Common myeloid progenitor, CD34-positive (primary cell): ENCODE measurements at regions of chr17 and their contacts with region 1.

Region 1: GRCh38 chr17:2688351-2689342 is 22.9 kb downstream of the CLUH start:
- DNase-seq: no peak
- H3K4me3 ChIP-seq: no peak overlapping the region
- H3K27ac ChIP-seq: no peak overlapping the region
- H3K4me1 ChIP-seq: no peaks in the 10 kb centered on the region
- H3K27me3 ChIP-seq: no peaks in the 10 kb centered on the region

Region 2: GRCh38 chr17:2582493-2582892 is 106.2 kb before region 1 on chr17:
- CTCF ChIA-PET with region 1: no interaction called
- POLR2A ChIA-PET with region 1: interaction called, 10 read pairs
- DNase-seq: no peak
- H3K4me3 ChIP-seq: no peak overlapping the region
- H3K27ac ChIP-seq: no peak overlapping the region
- H3K4me1 ChIP-seq: no peaks in the 10 kb centered on the region
- H3K27me3 ChIP-seq: peaks cover 0 to 3% (median 0%) of the 10 kb centered on the region in 5 experiments

Region 3: DNA sequence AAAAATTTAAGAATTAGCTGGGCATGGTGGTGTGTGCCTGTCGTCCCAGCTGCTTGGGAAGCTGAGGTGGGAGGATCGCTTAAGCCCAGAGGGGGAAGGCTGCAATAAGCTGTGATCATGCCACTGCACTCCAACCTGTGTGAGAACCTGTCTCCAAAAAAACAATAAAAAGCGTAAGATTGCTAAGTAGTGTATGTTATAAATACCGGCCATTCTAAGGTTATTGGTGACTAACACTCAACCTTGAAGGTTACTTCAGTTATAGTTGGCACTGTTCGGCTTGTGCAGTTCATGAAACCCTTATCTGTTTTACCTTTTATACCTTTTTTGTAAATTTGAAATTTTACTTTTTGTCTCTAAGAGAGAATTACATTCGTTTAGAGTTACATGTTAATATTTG is 51.2 kb before region 1 on chr17:
- CTCF ChIA-PET with region 1: no interaction called
- POLR2A ChIA-PET with region 1: no interaction called
- DNase-seq: no peak
- H3K4me3 ChIP-seq: no peak overlapping the region
- H3K27ac ChIP-seq: no peak overlapping the region
- H3K4me1 ChIP-seq: no peaks in the 10 kb centered on the region
- H3K27me3 ChIP-seq: no peaks in the 10 kb centered on the region

Region 4: DNA sequence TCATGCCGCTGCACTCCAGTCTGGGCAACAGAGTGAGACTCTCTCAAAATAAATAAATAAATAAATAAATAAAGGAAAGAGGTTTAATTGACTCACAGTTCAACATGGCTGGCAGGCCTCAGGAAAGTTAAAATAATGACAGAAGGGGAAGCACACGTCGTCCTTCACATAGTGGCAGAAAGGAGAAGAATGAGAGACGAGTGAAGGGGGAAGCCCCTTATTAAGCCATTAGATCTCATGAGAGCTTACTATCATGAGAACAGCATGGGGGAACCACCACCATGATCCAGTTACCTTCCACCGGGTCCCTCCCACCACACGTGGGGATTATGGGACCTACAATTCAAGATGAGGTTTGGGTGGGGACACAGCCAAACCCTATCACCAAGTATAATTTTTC is 40.7 kb before region 1 on chr17:
- CTCF ChIA-PET with region 1: no interaction called
- POLR2A ChIA-PET with region 1: no interaction called
- DNase-seq: peak in 2 of 3 donors; percentile 47
- H3K4me3 ChIP-seq: no peak overlapping the region
- H3K27ac ChIP-seq: no peak overlapping the region
- H3K4me1 ChIP-seq: no peaks in the 10 kb centered on the region
- H3K27me3 ChIP-seq: no peaks in the 10 kb centered on the region

Region 5: GRCh38 chr17:2707721-2708584 is 19.3 kb after region 1 on chr17:
- CTCF ChIA-PET with region 1: no interaction called
- POLR2A ChIA-PET with region 1: no interaction called
- DNase-seq: no peak
- H3K4me3 ChIP-seq: no peak overlapping the region
- H3K27ac ChIP-seq: peak overlapping the region in 1 of 2 experiments; percentile 49
- H3K4me1 ChIP-seq: peaks cover 4 to 42% (median 33%) of the 10 kb centered on the region in 4 experiments
- H3K27me3 ChIP-seq: no peaks in the 10 kb centered on the region

Region 6: DNA sequence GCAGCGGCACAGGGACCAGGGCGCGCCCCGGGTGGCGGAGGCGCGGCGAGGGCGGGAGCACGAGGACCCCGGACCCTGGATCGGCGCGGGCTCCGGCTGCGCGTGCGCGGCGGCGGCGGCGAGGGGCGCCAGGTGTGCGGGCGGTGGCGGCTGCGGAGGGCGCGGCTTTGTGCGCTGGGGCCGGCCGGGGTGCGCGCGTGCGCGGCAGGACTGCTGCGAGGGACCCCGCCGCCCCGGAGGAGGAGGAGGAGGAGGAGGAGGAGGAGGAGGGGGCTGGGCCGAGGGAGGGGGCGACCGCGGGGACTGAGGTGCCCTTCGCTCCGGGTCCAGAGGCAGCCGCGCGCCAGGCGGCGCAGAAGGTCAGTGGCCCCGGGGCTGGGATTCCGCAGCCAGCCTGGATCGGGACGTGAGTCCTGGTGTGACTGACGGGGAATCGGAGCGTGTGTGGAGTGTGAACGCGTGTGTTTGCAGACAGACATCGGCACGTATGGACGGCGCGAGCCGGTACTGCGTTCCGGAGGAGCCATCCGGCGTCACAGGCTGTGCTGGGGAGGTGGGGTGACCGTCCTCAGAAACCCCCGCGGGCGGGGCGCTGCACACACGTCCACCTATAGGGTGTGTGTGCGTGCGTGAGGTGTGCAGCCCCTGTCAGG is 88.1 kb after region 1 on chr17:
- CTCF ChIA-PET with region 1: no interaction called
- POLR2A ChIA-PET with region 1: no interaction called
- DNase-seq: peak in 2 of 3 donors; percentile 35 to 54
- H3K4me3 ChIP-seq: peak overlapping the region; percentile 10 to 77 (median 42)
- H3K27ac ChIP-seq: no peak overlapping the region
- H3K4me1 ChIP-seq: peaks cover 0 to 12% (median 11%) of the 10 kb centered on the region in 4 experiments
- H3K27me3 ChIP-seq: peaks cover 3 to 55% (median 16%) of the 10 kb centered on the region in 5 experiments